ENCODE measurements at regions of chr1 and their contacts with region 1.

Region 1: GRCh38 chr1:45359882-45360513 is 19.8 kb upstream of the MUTYH start:
- DNase-seq: peak; percentile 77

Region 2: DNA sequence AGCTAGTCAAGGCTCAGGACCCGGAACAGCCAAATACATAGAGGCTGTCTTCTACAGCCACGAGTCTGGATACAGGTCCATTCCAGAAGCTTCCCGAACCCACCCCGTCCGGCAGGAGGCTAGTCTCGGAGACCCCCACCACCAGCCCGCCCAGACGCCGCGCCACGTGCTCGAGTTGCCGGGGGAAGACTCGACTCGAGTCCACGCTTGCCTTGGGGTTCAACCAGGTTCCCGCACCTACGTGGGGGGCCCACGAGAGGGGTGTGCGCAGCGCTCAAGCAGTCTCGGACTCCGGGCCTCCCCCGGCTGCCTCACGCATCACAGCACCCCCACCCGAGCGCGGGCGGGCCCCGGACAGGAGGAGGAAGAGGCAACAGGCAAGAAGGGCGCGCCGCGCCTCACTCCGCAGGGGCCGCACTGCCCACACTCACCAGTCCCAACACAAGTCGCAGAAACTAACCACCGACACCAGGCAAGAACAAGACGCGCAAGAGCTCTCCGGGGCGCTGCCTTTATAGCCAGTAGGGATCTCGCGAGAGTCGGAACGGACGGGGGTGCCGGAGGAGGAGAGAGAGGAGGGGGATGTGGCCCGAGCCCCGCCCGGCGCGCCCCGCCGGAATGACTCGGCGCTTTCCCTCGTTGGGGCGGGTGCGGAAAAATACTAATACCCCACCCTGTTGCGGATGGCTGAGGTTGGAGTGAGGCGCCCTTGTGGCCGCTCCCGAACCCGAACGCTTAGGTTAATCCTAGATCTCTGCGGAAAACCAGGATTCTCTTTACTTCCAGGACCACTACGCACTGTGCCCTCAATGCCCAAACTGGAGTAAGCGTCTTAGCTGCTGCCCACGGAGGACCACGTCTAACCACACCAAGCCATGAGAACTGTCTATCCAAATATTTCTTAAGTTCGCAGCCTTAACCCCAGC is 161.7 kb after region 1 on chr1 and contains the start of gene PRDX1:
- in situ Hi-C with region 1: loop called (anchors 25 kb)
- DNase-seq: peak; percentile 96
- total RNA-seq, gene PRDX1: 1,347 and 1,417 TPM in 2 replicates

Measured in G401 (cell line).